ENCODE measurements at regions of chr11 and their contacts with region 1.

Region 1: DNA sequence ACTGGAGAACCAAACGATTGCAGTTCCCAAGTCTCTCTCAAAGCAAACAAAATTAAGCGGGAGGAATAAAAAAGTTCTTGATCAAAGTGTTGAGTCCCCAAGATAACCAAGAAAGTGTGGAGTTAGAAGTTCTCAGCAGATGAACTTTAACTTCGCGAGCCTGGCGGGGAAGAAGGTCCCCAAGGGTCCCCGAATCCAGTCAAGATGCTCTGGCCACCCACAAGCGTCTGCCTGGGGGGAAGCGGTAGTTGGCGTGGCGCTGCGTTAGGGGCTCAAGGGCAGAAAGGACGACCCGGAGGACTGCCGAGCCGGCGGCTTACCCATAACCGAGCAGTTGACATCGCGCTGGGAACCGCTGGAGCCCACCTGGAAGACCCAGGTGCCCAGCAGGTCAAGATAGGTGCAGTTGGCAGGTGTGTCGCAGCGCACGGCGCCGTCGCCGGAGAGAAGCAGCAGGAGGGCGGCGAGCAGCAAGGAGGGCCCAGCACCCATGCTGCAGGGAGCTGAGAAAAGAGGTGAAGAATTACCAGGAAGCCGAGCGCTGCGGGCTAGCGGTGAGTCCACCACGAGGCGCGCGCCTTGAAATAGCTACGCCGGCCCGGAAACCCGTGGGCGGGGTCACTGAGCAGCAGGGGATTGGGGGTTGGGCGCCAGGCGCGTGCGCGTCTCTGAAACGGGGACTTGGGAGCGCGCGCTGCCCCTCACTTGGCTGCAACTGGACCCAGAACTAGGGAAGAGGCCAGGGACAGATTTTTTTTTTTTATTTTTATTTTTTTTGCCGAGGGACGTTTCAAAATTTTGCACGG is at the start of gene CTSC:
- DNase-seq: peak; percentile 92
- H3K4me3 Mint-ChIP-seq: peak within 1 kb of the TSS; percentile 99
- H3K27ac Mint-ChIP-seq: peak within 1 kb of the TSS; percentile 73
- H3K4me1 Mint-ChIP-seq: peaks cover 48% of the 10 kb centered on the region
- H3K27me3 Mint-ChIP-seq: no peaks in the 10 kb centered on the region
- total RNA-seq, gene CTSC: 19.1 to 22.2 TPM

Region 2: GRCh38 chr11:88231894-88232482 is 105.4 kb before region 1 on chr11:
- CTCF ChIA-PET with region 1: no interaction called
- intact Hi-C with region 1: loop called (anchors 5 kb)
- DNase-seq: peak; percentile 34
- H3K4me3 Mint-ChIP-seq: no peak overlapping the region
- H3K27ac Mint-ChIP-seq: no peak overlapping the region
- H3K4me1 Mint-ChIP-seq: no peaks in the 10 kb centered on the region
- H3K27me3 Mint-ChIP-seq: peaks cover 4% of the 10 kb centered on the region

Region 3: DNA sequence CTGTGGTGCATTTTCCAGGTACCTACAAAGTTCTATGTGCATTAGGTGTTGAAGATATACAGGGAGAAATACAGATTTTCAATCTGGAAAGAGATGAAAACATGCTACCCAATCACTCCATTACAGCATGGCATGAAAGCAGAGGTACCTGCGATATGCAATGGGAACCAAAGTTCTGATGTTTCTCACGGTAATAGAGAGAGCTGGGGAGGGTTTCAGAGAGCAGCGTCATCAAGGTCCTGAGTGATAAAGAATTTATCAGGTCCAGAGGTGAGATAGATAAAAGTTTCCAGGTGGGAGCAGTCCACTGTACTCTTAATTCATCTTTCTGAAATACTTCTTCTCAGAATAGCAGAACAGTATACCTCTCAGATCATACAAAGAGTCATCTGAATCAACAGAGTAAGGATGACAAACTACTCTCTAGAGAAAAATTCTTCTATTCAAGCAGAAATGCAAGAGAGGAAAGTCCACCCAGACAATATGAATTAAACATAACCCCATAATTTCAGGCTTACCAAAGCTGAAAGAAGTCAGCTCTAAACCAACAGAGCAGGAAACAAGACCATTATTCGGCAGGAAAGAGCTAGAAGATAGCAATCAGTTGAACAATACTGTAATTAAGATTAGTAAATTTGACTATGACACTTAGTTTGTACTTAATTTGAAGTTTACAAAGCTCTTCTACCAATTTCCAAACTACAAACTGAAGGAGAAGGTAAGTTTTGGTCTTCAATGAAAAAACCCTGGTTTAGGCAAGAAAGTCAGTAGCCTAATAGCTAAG is 12.6 kb before region 1 on chr11:
- CTCF ChIA-PET with region 1: interaction called, 4 read pairs
- intact Hi-C with region 1: loop called (anchors 1 kb)
- DNase-seq: no peak
- H3K4me3 Mint-ChIP-seq: no peak overlapping the region
- H3K27ac Mint-ChIP-seq: no peak overlapping the region
- H3K4me1 Mint-ChIP-seq: peaks cover 62% of the 10 kb centered on the region
- H3K27me3 Mint-ChIP-seq: no peaks in the 10 kb centered on the region

Region 4: DNA sequence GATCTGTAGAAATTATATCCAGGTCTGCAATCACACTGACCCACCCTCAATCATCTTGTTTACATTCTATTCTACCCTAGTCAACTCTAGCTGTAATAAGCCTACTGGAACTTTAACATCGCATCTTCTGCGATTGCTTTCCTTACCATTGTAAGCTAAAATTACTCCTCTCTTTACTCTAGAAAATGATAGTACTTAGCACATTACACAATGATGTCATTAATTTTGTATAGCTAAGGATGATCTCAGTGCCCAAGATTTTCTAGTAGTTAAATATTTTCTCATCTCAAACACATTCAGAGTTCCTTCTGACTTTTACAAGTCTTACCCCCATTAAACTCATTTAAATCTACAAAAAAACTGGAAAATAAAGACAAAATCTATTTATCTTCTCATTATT is 39.8 kb after region 1 on chr11:
- CTCF ChIA-PET with region 1: no interaction called
- intact Hi-C with region 1: no loop called
- DNase-seq: no peak
- H3K4me3 Mint-ChIP-seq: no peak overlapping the region
- H3K27ac Mint-ChIP-seq: no peak overlapping the region
- H3K4me1 Mint-ChIP-seq: no peaks in the 10 kb centered on the region
- H3K27me3 Mint-ChIP-seq: no peaks in the 10 kb centered on the region

Region 5: DNA sequence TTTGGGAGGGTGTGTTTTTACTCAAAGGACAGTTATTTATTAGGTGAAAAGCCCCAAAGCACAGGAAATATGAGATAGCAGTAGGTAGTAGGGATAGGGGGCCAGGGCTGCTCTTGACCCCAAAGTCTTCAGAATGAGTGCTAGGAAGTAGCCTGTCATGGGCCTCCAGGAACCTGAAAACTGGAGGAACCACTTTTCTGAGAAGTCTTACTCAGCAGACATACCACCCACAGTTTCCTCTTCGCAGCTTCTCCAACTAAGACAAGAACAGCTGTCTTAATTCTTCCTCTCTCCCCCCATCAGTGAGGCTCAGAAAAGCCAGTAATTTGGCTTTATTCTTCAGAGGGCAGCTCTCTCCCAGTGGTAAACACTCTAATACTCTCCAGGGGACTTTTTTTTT is 84.1 kb after region 1 on chr11:
- CTCF ChIA-PET with region 1: no interaction called
- intact Hi-C with region 1: loop called (anchors 1 kb)
- DNase-seq: peak; percentile 63
- H3K4me3 Mint-ChIP-seq: no peak overlapping the region
- H3K27ac Mint-ChIP-seq: no peak overlapping the region
- H3K4me1 Mint-ChIP-seq: peaks cover 39% of the 10 kb centered on the region
- H3K27me3 Mint-ChIP-seq: no peaks in the 10 kb centered on the region